ENCODE measurements at regions of chr12 and their contacts with region 1.

Region 1: GRCh38 chr12:110600254-110600653 is 13.7 kb upstream of the TCTN1 start:
- DNase-seq: no peak
- ATAC-seq: no peak
- H3K4me3 Mint-ChIP-seq: no peak overlapping the region
- H3K27ac Mint-ChIP-seq: no peak overlapping the region
- H3K4me1 Mint-ChIP-seq: peaks cover 7% of the 10 kb centered on the region
- H3K27me3 Mint-ChIP-seq: no peaks in the 10 kb centered on the region
- CTCF ChIP-seq: peak; percentile 61

Region 2: DNA sequence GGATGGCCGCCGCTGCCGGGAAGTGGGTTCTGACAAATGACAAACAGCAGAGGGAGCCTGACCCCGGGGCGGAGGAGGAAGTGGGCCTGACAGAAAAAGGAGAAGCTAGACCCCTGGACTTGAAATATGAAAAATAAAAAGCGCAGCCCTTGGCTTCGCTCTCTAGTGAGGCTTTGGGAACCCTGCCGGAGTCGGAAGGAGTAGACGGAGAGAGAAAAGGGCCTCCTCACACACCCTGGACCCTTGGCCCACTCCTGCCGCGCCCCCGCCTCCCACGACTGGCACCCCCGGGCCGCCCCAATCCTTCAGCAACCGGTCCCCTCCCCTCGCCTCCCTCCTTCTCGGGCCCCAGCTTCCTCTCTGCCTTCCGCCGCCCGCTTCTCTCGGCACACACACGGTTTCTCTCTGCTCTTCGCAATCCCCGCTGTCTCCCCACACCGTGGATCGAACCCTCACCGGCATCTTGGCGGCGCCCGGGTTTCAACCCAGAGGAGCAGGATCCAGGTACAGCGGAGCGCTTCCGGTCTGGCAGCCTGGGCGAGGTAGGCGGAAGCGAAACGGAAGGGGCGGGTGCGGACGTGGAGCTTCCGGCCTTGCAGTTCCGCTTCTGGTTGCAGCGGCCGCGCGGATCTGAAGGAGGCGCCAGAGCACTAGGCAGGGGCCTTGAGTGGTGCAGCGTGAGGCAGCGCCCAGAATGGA is 150.3 kb before region 1 on chr12 and contains the start of gene ARPC3:
- CTCF ChIA-PET with region 1: interaction called, 51 read pairs
- POLR2A ChIA-PET with region 1: no interaction called
- intact Hi-C with region 1: no loop called
- DNase-seq: peak; percentile 98
- ATAC-seq: peak; percentile 98
- H3K4me3 Mint-ChIP-seq: peak within 1 kb of the TSS; percentile 87
- H3K27ac Mint-ChIP-seq: peak within 1 kb of the TSS; percentile 100
- H3K4me1 Mint-ChIP-seq: peaks cover 34% of the 10 kb centered on the region
- H3K27me3 Mint-ChIP-seq: no peaks in the 10 kb centered on the region
- CTCF ChIP-seq: peak; percentile 74
- total RNA-seq, gene ARPC3: 229 to 240 TPM

Region 3: DNA sequence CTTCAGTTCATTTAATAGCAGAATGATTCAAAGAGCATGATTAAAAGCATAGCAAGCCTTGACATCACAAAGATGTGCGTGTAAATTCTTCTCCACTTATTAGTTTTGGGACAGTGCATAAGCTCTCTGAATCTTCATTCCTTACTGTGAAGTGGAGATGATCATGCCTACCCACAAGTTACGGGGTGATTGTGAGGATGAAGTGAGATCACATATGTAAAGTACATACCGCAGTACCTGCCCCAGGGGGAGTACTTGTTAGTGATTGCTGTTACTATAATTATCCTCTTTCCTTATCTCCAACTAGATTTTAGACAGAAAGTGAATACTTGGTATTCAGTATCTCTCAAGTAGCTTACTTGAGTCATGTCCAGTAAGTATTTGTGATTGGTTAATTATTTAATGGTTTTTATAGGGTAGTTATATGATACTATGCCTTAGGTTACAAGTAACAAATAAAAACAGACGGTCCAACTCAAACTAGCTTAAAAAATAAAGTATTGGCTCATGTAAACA is 92.1 kb before region 1 on chr12:
- CTCF ChIA-PET with region 1: interaction called, 163 read pairs
- POLR2A ChIA-PET with region 1: interaction called, 15 read pairs
- intact Hi-C with region 1: loop called (anchors 2 kb)
- DNase-seq: no peak
- ATAC-seq: no peak
- H3K4me3 Mint-ChIP-seq: no peak overlapping the region
- H3K27ac Mint-ChIP-seq: no peak overlapping the region
- H3K4me1 Mint-ChIP-seq: peaks cover 2% of the 10 kb centered on the region
- H3K27me3 Mint-ChIP-seq: no peaks in the 10 kb centered on the region
- CTCF ChIP-seq: no peak

Region 4: DNA sequence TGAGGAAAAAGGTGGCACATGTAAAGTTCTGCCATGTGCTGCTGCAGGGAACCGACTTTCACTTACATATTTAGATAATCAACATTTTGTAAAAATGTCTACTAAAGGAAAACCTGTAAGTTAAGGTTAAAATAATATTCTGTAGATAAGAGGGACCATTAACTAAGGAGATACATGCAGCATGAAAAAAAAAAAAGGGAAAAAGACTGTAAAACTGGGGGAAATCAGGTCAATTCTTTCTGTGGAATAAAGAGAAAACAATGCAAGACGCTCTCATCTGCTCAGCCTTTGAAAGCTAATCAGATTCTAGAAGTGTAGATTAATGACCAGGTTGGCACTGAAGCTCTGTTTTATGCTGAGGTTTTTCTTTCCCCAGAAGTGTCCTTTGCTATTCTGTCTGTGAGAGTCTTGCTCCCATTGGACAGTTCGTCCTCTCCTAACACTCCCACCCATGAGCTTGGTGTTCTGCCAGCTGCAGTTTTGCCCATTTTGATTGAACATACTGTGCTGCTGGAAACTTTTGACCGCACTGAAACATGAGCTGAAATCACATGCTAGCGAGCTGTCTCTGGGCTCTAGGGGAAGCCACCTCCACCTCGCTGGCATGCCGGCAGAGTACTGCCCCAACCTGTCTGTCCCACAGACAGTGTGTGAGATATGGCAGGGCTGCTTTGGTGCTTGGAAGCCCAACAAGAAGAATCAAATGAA is 56.8 kb before region 1 on chr12:
- CTCF ChIA-PET with region 1: interaction called, 171 read pairs
- POLR2A ChIA-PET with region 1: interaction called, 4 read pairs
- intact Hi-C with region 1: no loop called
- DNase-seq: no peak
- ATAC-seq: peak; percentile 20
- H3K4me3 Mint-ChIP-seq: no peak overlapping the region
- H3K27ac Mint-ChIP-seq: peak overlapping the region; percentile 67
- H3K4me1 Mint-ChIP-seq: peaks cover 42% of the 10 kb centered on the region
- H3K27me3 Mint-ChIP-seq: no peaks in the 10 kb centered on the region
- CTCF ChIP-seq: no peak

Region 5: GRCh38 chr12:110563702-110564640 is 36.3 kb before region 1 on chr12:
- CTCF ChIA-PET with region 1: interaction called, 17 read pairs
- POLR2A ChIA-PET with region 1: no interaction called
- intact Hi-C with region 1: no loop called
- DNase-seq: no peak
- ATAC-seq: peak; percentile 35
- H3K4me3 Mint-ChIP-seq: peak overlapping the region; percentile 3
- H3K27ac Mint-ChIP-seq: peak overlapping the region; percentile 93
- H3K4me1 Mint-ChIP-seq: peaks cover 67% of the 10 kb centered on the region
- H3K27me3 Mint-ChIP-seq: no peaks in the 10 kb centered on the region
- CTCF ChIP-seq: no peak

Region 6: DNA sequence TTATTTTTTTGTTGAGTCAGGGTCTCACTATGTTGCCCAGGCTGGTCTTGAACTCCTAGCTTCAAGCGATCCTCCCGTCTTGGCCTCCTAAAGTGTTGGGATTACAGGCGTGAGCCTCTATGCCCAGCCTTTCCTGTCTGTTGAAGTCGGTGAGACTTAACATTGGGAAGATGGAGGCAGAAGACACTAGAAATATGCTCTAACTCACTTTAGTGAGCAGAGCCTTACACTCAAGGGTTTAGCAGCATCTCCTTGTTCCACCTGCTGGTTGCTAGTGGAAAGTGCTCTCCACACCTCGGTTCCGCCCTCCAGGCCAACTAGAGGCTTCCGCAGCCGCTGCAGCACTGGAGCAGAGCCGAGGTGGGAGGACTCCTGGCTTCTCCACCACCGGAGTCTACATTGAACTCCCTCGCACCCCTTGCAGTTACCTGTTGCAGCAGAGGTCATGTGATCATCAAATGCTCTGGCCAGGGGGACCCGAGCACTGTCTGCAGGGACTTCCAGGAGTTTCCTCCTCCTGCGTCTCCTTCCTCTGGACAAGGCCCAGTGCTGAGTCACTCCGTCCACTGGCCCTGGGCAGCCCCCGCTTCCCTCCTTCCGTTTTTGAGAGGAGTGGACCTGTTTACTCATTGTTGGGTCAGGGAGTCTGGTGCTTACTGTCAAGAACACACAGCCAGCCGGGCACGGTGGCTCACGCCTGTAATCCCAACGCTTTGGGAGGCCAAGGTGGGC is 98.1 kb after region 1 on chr12:
- CTCF ChIA-PET with region 1: interaction called, 10 read pairs
- POLR2A ChIA-PET with region 1: no interaction called
- intact Hi-C with region 1: no loop called
- DNase-seq: peak; percentile 90
- ATAC-seq: peak; percentile 100
- H3K4me3 Mint-ChIP-seq: no peak overlapping the region
- H3K27ac Mint-ChIP-seq: peak overlapping the region; percentile 87
- H3K4me1 Mint-ChIP-seq: peaks cover 16% of the 10 kb centered on the region
- H3K27me3 Mint-ChIP-seq: no peaks in the 10 kb centered on the region
- CTCF ChIP-seq: peak; percentile 75

Measured in activated CD8-positive, alpha-beta T cell treated with anti-CD3 and anti-CD28 coated beads for 36 hours (primary cell).